GM12878 (cell line): ENCODE measurements at regions of chr19 and their contacts with region 1.

Region 1: GRCh38 chr19:38869856-38870607 is 8.0 kb downstream of the RINL start:
- DNase-seq: no peak
- ATAC-seq: peak; percentile 92
- H3K4me3 ChIP-seq: peak overlapping the region; percentile 52; the same call in 1 of the 2 replicates
- H3K27ac ChIP-seq: peak overlapping the region; percentile 46; the same call in 1 of the 2 replicates
- H3K4me1 ChIP-seq: peaks cover 23% of the 10 kb centered on the region
- H3K27me3 ChIP-seq: no peaks in the 10 kb centered on the region
- CTCF ChIP-seq: peak; percentile 90 to 95 (median 94); a peak in 5 of 6 replicates
- EP300 ChIP-seq: no peak
- POLR2A ChIP-seq: peak; percentile 46
- RAD21 ChIP-seq: peak; percentile 78

Region 2: DNA sequence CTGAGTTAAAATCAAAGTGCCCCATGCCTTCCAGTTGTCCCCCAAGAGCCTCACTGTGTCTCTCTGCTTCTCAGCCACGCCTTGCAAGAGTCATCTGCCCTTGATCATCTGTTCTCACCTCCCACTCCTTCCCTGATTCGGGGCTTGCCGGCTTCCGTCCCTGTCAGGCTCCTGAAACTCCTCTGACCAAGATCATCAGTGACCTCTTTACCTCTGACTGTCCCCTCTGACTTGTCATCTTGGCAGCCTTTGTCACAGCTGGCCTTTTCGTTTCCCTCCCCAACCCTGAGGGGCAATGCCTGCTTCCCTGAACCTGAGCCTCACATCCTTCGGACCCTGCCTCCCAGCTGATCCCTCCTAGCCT is 318.6 kb before region 1 on chr19:
- CTCF ChIA-PET with region 1: interaction called, 3 read pairs
- POLR2A ChIA-PET with region 1: no interaction called
- RAD21 ChIA-PET with region 1: interaction called, 6 read pairs
- SMC1A ChIA-PET with region 1: no interaction called
- in situ Hi-C with region 1: loop called (anchors 5 kb)
- intact Hi-C with region 1: no loop called
- DNase-seq: peak; percentile 52
- ATAC-seq: peak; percentile 87
- H3K4me3 ChIP-seq: no peak overlapping the region
- H3K27ac ChIP-seq: no peak overlapping the region
- H3K4me1 ChIP-seq: peaks cover 31% of the 10 kb centered on the region
- H3K27me3 ChIP-seq: no peaks in the 10 kb centered on the region
- CTCF ChIP-seq: no peak
- EP300 ChIP-seq: peak; percentile 87 to 92; a peak in 3 of 4 replicates
- POLR2A ChIP-seq: no peak
- RAD21 ChIP-seq: no peak

Region 3: GRCh38 chr19:38831142-38831605 is 38.9 kb before region 1 on chr19:
- CTCF ChIA-PET with region 1: interaction called, 14 read pairs
- POLR2A ChIA-PET with region 1: interaction called, 12 read pairs
- RAD21 ChIA-PET with region 1: interaction called, 21 read pairs
- SMC1A ChIA-PET with region 1: interaction called, 12 read pairs
- in situ Hi-C with region 1: no loop called
- intact Hi-C with region 1: no loop called
- DNase-seq: no peak
- ATAC-seq: peak; percentile 91
- H3K4me3 ChIP-seq: peak overlapping the region; percentile 75
- H3K27ac ChIP-seq: peak overlapping the region; percentile 95
- H3K4me1 ChIP-seq: no peaks in the 10 kb centered on the region; the same call in 1 of the 2 replicates
- H3K27me3 ChIP-seq: no peaks in the 10 kb centered on the region
- CTCF ChIP-seq: no peak
- EP300 ChIP-seq: no peak
- POLR2A ChIP-seq: no peak
- RAD21 ChIP-seq: no peak

Region 4: GRCh38 chr19:38849860-38850435 is 20.1 kb before region 1 on chr19 and contains the start of gene HNRNPL:
- CTCF ChIA-PET with region 1: interaction called, 15 read pairs
- POLR2A ChIA-PET with region 1: interaction called, 144 read pairs
- RAD21 ChIA-PET with region 1: interaction called, 47 read pairs
- SMC1A ChIA-PET with region 1: interaction called, 44 read pairs
- in situ Hi-C with region 1: no loop called
- intact Hi-C with region 1: no loop called
- DNase-seq: peak; percentile 100
- ATAC-seq: peak; percentile 76
- H3K4me3 ChIP-seq: peak within 1 kb of the TSS; percentile 79
- H3K27ac ChIP-seq: peak within 1 kb of the TSS; percentile 96
- H3K4me1 ChIP-seq: peaks cover 10% of the 10 kb centered on the region
- H3K27me3 ChIP-seq: no peaks in the 10 kb centered on the region
- CTCF ChIP-seq: peak; percentile 28 to 42 (median 33); a peak in 4 of 6 replicates
- EP300 ChIP-seq: 0 out of 4 replicates have a peak, but pooled peaks of 1 of the 2 experiments have one; percentile 10
- POLR2A ChIP-seq: peak; percentile 90
- RAD21 ChIP-seq: no peak
- polyA plus RNA-seq, gene HNRNPL: 32.5 to 92.5 TPM

Region 5: GRCh38 chr19:38856813-38857212 is 13.2 kb before region 1 on chr19:
- CTCF ChIA-PET with region 1: interaction called, 17 read pairs
- POLR2A ChIA-PET with region 1: interaction called, 144 read pairs
- RAD21 ChIA-PET with region 1: interaction called, 47 read pairs
- SMC1A ChIA-PET with region 1: interaction called, 44 read pairs
- in situ Hi-C with region 1: no loop called
- intact Hi-C with region 1: no loop called
- DNase-seq: no peak
- ATAC-seq: no peak
- H3K4me3 ChIP-seq: no peak overlapping the region
- H3K27ac ChIP-seq: no peak overlapping the region
- H3K4me1 ChIP-seq: peaks cover 25% of the 10 kb centered on the region
- H3K27me3 ChIP-seq: no peaks in the 10 kb centered on the region
- CTCF ChIP-seq: no peak
- EP300 ChIP-seq: no peak
- POLR2A ChIP-seq: no peak
- RAD21 ChIP-seq: no peak

Region 6: DNA sequence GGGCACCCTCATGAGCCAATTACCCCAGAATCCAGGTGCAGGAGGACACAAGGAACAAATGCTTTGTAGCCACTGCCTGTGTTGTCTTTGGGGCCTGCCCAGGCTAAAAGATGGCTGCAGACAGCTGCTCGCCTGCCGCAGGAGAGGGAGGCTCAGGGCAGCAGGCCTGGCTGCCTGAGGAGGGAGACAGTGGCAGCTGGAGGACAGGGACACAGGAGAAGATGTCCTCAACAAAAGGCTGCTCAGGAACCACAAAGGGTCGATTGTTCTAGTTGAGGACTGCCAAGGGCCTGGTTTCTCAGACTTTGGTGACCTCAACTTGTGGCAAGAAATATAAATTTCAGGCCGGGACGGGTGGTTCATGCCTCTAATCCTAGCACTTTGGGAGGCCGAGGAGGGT is 21.7 kb after region 1 on chr19:
- CTCF ChIA-PET with region 1: interaction called, 13 read pairs
- POLR2A ChIA-PET with region 1: no interaction called
- RAD21 ChIA-PET with region 1: interaction called, 3 read pairs
- SMC1A ChIA-PET with region 1: interaction called, 4 read pairs
- in situ Hi-C with region 1: no loop called
- intact Hi-C with region 1: no loop called
- DNase-seq: no peak
- ATAC-seq: no peak
- H3K4me3 ChIP-seq: no peak overlapping the region
- H3K27ac ChIP-seq: no peak overlapping the region
- H3K4me1 ChIP-seq: no peaks in the 10 kb centered on the region
- H3K27me3 ChIP-seq: no peaks in the 10 kb centered on the region
- CTCF ChIP-seq: no peak
- EP300 ChIP-seq: no peak
- POLR2A ChIP-seq: no peak
- RAD21 ChIP-seq: no peak

Region 7: GRCh38 chr19:38899447-38900219 is 29.6 kb after region 1 on chr19 and contains the starts of genes NFKBIB and SIRT2:
- CTCF ChIA-PET with region 1: no interaction called
- POLR2A ChIA-PET with region 1: interaction called, 10 read pairs
- RAD21 ChIA-PET with region 1: interaction called, 7 read pairs
- SMC1A ChIA-PET with region 1: interaction called, 5 read pairs
- in situ Hi-C with region 1: no loop called
- intact Hi-C with region 1: no loop called
- DNase-seq: peak; percentile 99
- ATAC-seq: peak; percentile 96
- H3K4me3 ChIP-seq: peak within 1 kb of the TSS; percentile 90
- H3K27ac ChIP-seq: peak within 1 kb of the TSS; percentile 75
- H3K4me1 ChIP-seq: peaks cover 5% of the 10 kb centered on the region
- H3K27me3 ChIP-seq: no peaks in the 10 kb centered on the region
- CTCF ChIP-seq: no peak
- EP300 ChIP-seq: no peak
- POLR2A ChIP-seq: peak; percentile 79
- RAD21 ChIP-seq: no peak
- polyA plus RNA-seq, gene NFKBIB: 1.2 to 4.3 TPM
- polyA plus RNA-seq, gene SIRT2: 1.4 to 5.1 TPM

Region 8: DNA sequence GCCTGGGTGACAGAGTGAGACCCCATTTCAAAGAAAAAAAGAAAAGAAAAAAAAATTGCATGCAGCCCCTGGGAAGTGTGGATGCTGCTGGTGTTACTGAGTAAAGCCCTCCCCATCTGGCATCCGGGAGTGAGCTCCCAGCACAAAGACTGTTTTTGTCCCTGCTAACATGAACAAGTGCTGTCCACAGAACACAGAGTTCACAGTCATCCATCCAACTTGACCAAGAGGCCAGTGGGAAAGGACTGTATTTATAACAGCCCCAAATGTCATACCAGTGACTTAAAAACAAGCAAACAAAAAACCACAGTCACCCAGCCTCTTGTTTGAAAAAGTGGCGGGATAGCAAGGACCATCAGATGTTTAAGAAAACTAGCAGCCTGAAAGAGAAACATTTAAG is 94.7 kb after region 1 on chr19:
- CTCF ChIA-PET with region 1: no interaction called
- POLR2A ChIA-PET with region 1: no interaction called
- RAD21 ChIA-PET with region 1: no interaction called
- SMC1A ChIA-PET with region 1: no interaction called
- in situ Hi-C with region 1: no loop called
- intact Hi-C with region 1: no loop called
- DNase-seq: no peak
- ATAC-seq: no peak
- H3K4me3 ChIP-seq: no peak overlapping the region
- H3K27ac ChIP-seq: no peak overlapping the region
- H3K4me1 ChIP-seq: no peaks in the 10 kb centered on the region
- H3K27me3 ChIP-seq: no peaks in the 10 kb centered on the region
- CTCF ChIP-seq: no peak
- EP300 ChIP-seq: no peak
- POLR2A ChIP-seq: no peak
- RAD21 ChIP-seq: no peak

Region 9: GRCh38 chr19:39046118-39046821 is 176.2 kb after region 1 on chr19:
- CTCF ChIA-PET with region 1: no interaction called
- POLR2A ChIA-PET with region 1: no interaction called
- RAD21 ChIA-PET with region 1: no interaction called
- SMC1A ChIA-PET with region 1: no interaction called
- in situ Hi-C with region 1: no loop called
- intact Hi-C with region 1: no loop called
- DNase-seq: no peak
- ATAC-seq: peak; percentile 83
- H3K4me3 ChIP-seq: no peak overlapping the region
- H3K27ac ChIP-seq: no peak overlapping the region
- H3K4me1 ChIP-seq: no peaks in the 10 kb centered on the region
- H3K27me3 ChIP-seq: no peaks in the 10 kb centered on the region
- CTCF ChIP-seq: no peak
- EP300 ChIP-seq: no peak
- POLR2A ChIP-seq: no peak
- RAD21 ChIP-seq: no peak